ENCODE measurements at regions of chr6 and their contacts with region 1.

Region 1: DNA sequence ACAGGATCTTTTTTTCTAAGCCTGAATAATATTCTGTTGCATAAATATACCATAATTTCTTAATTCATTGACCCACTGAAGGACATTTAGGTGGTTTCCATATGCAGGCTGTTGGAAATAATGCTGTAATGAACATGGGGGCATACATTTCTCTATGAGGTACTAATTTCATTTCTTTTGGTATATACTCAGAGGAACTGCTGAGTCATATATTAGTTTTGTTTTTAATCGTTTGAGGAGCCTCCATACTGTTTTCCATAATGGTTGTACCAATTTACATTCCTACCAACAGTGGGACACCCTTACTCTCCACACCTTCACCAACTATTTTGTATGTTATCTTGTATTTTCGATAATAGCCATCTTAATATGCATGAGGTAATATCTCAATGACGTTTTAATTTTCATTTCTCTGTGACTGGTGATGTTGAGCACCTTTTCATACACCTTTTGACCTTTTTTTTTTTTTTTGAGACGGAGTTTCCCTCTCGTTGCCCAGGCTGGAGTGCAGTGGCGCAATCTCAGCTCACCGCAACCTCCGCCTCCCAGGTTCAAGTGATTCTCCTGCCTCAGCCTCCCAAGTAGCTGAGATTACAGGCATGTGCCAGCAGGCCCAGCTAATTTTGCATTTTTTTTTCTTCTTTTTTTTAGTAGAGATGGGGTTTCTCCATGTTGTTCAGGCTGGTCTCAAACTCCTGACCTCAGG is 187.4 kb downstream of the RNGTT start:
- DNase-seq: no peak
- H3K4me3 ChIP-seq: no peak overlapping the region
- CTCF ChIP-seq: no peak
- POLR2A ChIP-seq: no peak

Region 2: GRCh38 chr6:89443658-89444057 is 667.6 kb after region 1 on chr6:
- intact Hi-C with region 1: loop called (anchors 5 kb)
- DNase-seq: no peak
- H3K4me3 ChIP-seq: no peak overlapping the region
- CTCF ChIP-seq: no peak
- POLR2A ChIP-seq: no peak

Region 3: GRCh38 chr6:90458353-90459224 is 1682.6 kb after region 1 on chr6:
- intact Hi-C with region 1: no loop called
- DNase-seq: no peak
- H3K4me3 ChIP-seq: no peak overlapping the region
- CTCF ChIP-seq: no peak
- POLR2A ChIP-seq: no peak